K562 (cell line): ENCODE measurements at regions of chr6 and their contacts with region 1.

Region 1: DNA sequence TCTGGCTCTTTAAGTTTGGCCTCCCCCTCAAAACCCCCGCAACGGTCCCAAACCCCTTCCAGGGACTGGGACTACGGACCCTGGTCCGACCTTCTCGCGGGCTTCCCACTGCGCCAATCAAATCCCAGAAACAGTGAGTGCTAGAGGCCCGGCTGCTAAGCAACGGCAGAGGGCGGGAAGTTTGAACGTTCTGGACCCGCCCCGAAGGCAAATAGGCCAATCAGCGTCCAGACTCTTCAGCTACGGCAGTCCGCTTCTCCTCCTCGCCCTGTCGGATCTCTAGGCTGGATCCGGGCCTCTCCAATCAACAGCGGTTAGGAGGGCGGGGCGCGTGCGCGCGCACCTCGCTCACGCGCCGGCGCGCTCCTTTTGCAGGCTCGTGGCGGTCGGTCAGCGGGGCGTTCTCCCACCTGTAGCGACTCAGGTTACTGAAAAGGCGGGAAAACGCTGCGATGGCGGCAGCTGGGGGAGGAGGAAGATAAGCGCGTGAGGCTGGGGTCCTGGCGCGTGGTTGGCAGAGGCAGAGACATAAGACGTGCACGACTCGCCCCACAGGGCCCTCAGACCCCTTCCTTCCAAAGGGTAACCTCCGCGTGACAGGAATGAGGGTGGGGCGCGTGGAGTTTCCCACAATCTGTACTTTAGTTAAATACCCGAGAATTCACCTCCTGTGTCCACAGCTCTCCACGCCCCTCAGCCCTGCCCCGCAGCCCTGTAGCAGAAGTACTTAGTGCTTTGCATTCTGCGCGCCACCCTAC is at the start of gene MSH5:
- DNase-seq: peak; percentile 100
- ATAC-seq: peak; percentile 84
- H3K4me3 ChIP-seq: peak within 1 kb of the TSS; percentile 64
- H3K27ac ChIP-seq: peak within 1 kb of the TSS; percentile 95
- H3K4me1 ChIP-seq: peaks cover 56 to 61% of the 10 kb centered on the region in 2 experiments
- H3K27me3 ChIP-seq: no peaks in the 10 kb centered on the region
- CTCF ChIP-seq: peak in 1 of 3 experiments; percentile 13; a peak in 1 of 6 replicates
- EP300 ChIP-seq: peak; percentile 71
- POLR2A ChIP-seq: peak; percentile 96
- RAD21 ChIP-seq: peak in 1 of 2 experiments; percentile 28; a peak in 3 of 4 replicates
- polyA plus RNA-seq, gene MSH5: 12.5 to 14.0 TPM

Region 2: DNA sequence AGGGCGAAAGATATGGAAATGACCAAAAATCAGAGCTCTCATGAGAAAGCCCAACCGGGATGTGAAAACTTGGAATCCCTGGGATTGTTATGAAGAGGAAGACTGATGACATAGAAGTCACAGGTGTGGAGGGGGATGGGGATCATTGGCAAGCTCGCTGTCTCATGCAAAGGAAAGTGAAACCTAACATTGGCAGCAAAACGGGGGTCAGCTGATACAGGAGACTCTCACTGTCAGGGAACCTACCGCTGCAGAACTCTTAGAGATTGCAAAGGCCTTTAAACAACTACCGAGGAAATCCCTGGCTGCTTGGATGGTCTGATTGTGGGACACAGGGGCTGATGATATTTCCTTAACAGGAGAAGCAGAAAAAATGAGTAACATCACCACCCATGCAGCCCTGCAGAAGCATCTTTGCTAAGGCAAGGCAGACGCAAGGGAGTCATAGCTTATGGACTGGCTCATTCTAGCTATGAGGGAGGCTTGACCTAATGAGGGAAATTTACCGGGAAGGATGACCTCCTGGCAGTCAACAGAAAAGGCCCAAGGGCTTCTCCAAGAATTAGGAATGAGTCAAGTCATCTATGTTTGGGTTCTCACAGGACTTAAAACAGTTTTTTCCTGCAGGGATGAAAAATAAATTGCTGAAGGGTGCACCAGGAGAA is 749.3 kb before region 1 on chr6:
- CTCF ChIA-PET with region 1: no interaction called
- POLR2A ChIA-PET with region 1: no interaction called
- in situ Hi-C with region 1: no loop called
- intact Hi-C with region 1: no loop called
- DNase-seq: no peak
- ATAC-seq: no peak
- H3K4me3 ChIP-seq: no peak overlapping the region
- H3K27ac ChIP-seq: no peak overlapping the region
- H3K4me1 ChIP-seq: peaks cover 0 to 2% of the 10 kb centered on the region in 2 experiments; a peak in 2 of 5 replicates
- H3K27me3 ChIP-seq: peaks cover 13 to 48% of the 10 kb centered on the region in 2 experiments
- CTCF ChIP-seq: no peak
- EP300 ChIP-seq: no peak
- POLR2A ChIP-seq: no peak
- RAD21 ChIP-seq: no peak

Region 3: GRCh38 chr6:31680840-31681671 is 58.8 kb before region 1 on chr6 and contains the start of gene LY6G5C:
- CTCF ChIA-PET with region 1: no interaction called
- POLR2A ChIA-PET with region 1: interaction called, 6 read pairs
- in situ Hi-C with region 1: no loop called
- intact Hi-C with region 1: loop called (anchors 1 kb)
- DNase-seq: peak; percentile 82 to 94 (median 88)
- ATAC-seq: peak; percentile 88
- H3K4me3 ChIP-seq: no peak within 1 kb of the TSS
- H3K27ac ChIP-seq: no peak within 1 kb of the TSS
- H3K4me1 ChIP-seq: peaks cover 10 to 24% of the 10 kb centered on the region in 2 experiments
- H3K27me3 ChIP-seq: no peaks in the 10 kb centered on the region
- CTCF ChIP-seq: peak; percentile 96 to 99 (median 99)
- EP300 ChIP-seq: peak; percentile 39; the same call in 1 of the 2 replicates
- POLR2A ChIP-seq: no peak
- RAD21 ChIP-seq: peak; percentile 99 to 100
- polyA plus RNA-seq, gene LY6G5C: 0.10 TPM in 1 of 2 experiments, not detected in the other

Region 4: GRCh38 chr6:31702819-31703522 is 36.8 kb before region 1 on chr6 and contains the start of gene ABHD16A:
- CTCF ChIA-PET with region 1: no interaction called
- POLR2A ChIA-PET with region 1: interaction called, 29 read pairs
- in situ Hi-C with region 1: no loop called
- intact Hi-C with region 1: loop called (anchors 1 kb)
- DNase-seq: peak; percentile 100
- ATAC-seq: peak; percentile 95
- H3K4me3 ChIP-seq: peak within 1 kb of the TSS; percentile 68
- H3K27ac ChIP-seq: peak within 1 kb of the TSS; percentile 93
- H3K4me1 ChIP-seq: peaks cover 22 to 34% of the 10 kb centered on the region in 2 experiments
- H3K27me3 ChIP-seq: no peaks in the 10 kb centered on the region
- CTCF ChIP-seq: peak in 2 of 3 experiments; percentile 14 to 17; a peak in 1 of 6 replicates
- EP300 ChIP-seq: peak; percentile 73
- POLR2A ChIP-seq: peak; percentile 98
- RAD21 ChIP-seq: peak in 1 of 2 experiments; percentile 21; a peak in 1 of 4 replicates
- polyA plus RNA-seq, gene ABHD16A: 25.8 to 49.7 TPM

Region 5: DNA sequence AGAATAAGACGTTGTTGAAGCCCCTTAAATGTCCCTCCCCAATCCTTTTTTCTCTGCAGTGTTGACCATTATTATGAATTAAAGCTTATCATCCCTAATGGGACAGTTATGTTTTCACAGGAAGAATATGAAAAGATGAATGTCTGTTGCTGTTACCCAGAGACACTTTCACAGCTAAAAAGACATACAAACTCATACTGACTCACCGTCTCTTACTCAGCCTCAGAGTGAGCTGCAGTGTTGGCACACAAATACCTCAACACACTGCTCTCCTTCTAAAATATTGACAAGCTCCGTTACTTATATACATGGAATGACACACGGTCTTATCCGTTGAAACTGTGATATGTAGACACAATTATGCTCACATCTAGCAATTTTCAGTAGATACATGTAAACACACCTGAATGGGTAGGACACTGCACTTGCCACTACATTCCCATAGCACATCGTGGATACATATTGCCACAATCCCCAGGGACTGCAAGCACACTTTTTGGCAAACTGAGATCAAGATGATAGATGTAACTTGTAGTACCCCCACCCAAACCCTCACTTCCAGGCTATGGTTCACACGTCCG is 13.0 kb after region 1 on chr6:
- CTCF ChIA-PET with region 1: no interaction called
- POLR2A ChIA-PET with region 1: interaction called, 108 read pairs
- in situ Hi-C with region 1: no loop called
- intact Hi-C with region 1: no loop called
- DNase-seq: no peak
- ATAC-seq: peak; percentile 8
- H3K4me3 ChIP-seq: no peak overlapping the region
- H3K27ac ChIP-seq: 0 out of 3 replicates have a peak overlapping the region, but pooled peaks have one; percentile 0
- H3K4me1 ChIP-seq: peaks cover 5 to 15% of the 10 kb centered on the region in 2 experiments
- H3K27me3 ChIP-seq: no peaks in the 10 kb centered on the region
- CTCF ChIP-seq: no peak
- EP300 ChIP-seq: no peak
- POLR2A ChIP-seq: no peak
- RAD21 ChIP-seq: no peak

Region 6: GRCh38 chr6:31769684-31770371 is 30.0 kb after region 1 on chr6:
- CTCF ChIA-PET with region 1: no interaction called
- POLR2A ChIA-PET with region 1: interaction called, 29 read pairs
- in situ Hi-C with region 1: no loop called
- intact Hi-C with region 1: no loop called
- DNase-seq: peak; percentile 98 to 100 (median 100)
- ATAC-seq: peak; percentile 91
- H3K4me3 ChIP-seq: no peak overlapping the region
- H3K27ac ChIP-seq: peak overlapping the region; percentile 26; the same call in 2 of the 3 replicates
- H3K4me1 ChIP-seq: peaks cover 24 to 68% of the 10 kb centered on the region in 2 experiments
- H3K27me3 ChIP-seq: no peaks in the 10 kb centered on the region
- CTCF ChIP-seq: peak; percentile 98 to 100 (median 99)
- EP300 ChIP-seq: peak; percentile 28
- POLR2A ChIP-seq: no peak
- RAD21 ChIP-seq: peak; percentile 99 to 100

Region 7: GRCh38 chr6:31834434-31835198 is 94.8 kb after region 1 on chr6:
- CTCF ChIA-PET with region 1: interaction called, 4 read pairs
- POLR2A ChIA-PET with region 1: interaction called, 57 read pairs
- in situ Hi-C with region 1: no loop called
- intact Hi-C with region 1: no loop called
- DNase-seq: peak; percentile 88 to 99 (median 94)
- ATAC-seq: peak; percentile 79
- H3K4me3 ChIP-seq: peak overlapping the region; percentile 85
- H3K27ac ChIP-seq: peak overlapping the region; percentile 88
- H3K4me1 ChIP-seq: peaks cover 41 to 55% of the 10 kb centered on the region in 2 experiments
- H3K27me3 ChIP-seq: no peaks in the 10 kb centered on the region
- CTCF ChIP-seq: peak in 1 of 3 experiments; percentile 20; a peak in 1 of 6 replicates
- EP300 ChIP-seq: peak; percentile 83
- POLR2A ChIP-seq: peak; percentile 100
- RAD21 ChIP-seq: peak; percentile 1 to 33; a peak in 2 of 4 replicates

Region 8: DNA sequence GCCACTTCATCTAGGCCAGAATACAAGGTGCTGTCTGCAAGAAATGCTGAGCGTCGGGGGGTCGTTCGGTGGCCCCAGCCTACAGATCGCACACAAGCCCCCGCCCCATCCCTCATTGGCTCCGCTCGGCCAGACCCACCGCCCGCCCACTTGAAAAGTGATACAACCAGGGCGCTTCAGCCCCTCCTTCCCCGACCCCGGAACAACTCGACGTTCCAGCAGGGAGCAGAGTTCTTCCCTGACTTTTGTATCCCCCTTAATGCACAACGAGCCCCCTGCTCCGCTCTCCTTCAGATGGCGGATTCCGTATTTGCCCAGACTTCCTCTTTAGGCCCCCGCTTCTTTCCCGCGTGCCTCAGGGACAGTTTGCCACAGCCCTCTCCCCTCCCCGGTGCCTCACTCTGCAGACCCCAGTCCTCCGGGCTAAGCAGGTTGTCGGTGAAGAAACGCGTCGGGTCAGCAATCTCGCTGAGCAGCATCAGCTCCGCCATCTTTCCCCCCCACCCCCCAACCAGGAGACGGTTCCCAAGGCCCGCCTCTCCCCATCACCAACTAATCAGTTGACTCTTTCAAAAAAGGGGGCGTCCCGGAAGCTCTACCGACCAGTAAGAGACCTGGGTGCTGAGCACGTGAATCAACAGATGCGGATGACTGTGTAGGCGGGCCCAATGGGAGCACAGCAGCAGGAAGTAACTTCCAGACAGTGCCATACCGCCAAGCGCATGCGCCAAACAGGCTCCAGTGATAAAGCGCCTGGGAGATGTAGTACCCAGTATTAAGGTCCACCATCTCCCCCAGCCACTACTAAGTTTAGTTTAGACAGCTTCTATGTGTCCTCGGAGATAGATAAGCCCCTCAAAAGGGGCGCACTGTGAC is 388.1 kb after region 1 on chr6 and contains the start of gene ATF6B:
- CTCF ChIA-PET with region 1: no interaction called
- POLR2A ChIA-PET with region 1: no interaction called
- in situ Hi-C with region 1: no loop called
- intact Hi-C with region 1: loop called (anchors 2 kb)
- DNase-seq: peak; percentile 97 to 100 (median 98)
- ATAC-seq: peak; percentile 88
- H3K4me3 ChIP-seq: peak within 1 kb of the TSS; percentile 91
- H3K27ac ChIP-seq: peak within 1 kb of the TSS; percentile 86
- H3K4me1 ChIP-seq: peaks cover 31 to 32% of the 10 kb centered on the region in 2 experiments
- H3K27me3 ChIP-seq: no peaks in the 10 kb centered on the region
- CTCF ChIP-seq: no peak
- EP300 ChIP-seq: peak; percentile 53; the same call in 1 of the 2 replicates
- POLR2A ChIP-seq: peak; percentile 85
- RAD21 ChIP-seq: no peak
- polyA plus RNA-seq, gene ATF6B: 20.7 to 26.1 TPM